Naive thymus-derived CD8-positive, alpha-beta T cell (primary cell): ENCODE measurements at regions of chr17 and their contacts with region 1.

Region 1: DNA sequence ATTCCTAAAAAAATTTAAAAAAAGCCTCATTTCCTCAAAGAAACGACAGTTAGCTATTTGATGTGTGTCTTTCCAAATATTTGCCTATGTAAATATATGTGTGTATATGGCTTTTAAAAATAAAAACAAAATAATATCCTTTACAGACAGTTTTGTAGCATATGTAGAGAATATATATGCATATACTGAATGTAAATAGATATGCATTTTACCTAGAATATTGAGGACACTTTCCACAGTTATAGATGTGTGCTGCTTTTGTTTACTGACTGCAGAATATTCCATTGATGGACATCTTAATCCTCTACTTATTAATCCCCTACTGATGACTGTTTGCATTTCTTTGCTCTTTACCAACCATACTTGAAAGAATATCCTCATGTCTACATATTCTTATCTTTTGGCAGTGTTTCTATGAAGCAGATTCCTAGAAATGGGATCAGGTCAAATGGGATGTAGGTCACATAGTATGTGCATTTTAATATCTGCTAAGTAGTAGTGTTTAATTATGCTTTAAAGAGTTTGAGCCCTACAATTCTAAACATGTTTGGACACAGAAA is 3.3 kb downstream of the CCL3L1 start:
- DNase-seq: no peak
- ATAC-seq: no peak
- H3K4me3 Mint-ChIP-seq: peak overlapping the region in 1 of 10 donors; percentile 3
- H3K27ac Mint-ChIP-seq: peak overlapping the region in 1 of 10 donors; percentile 0
- H3K4me1 Mint-ChIP-seq: peaks cover 6 to 78% (median 32%) of the 10 kb centered on the region in 4 donors
- H3K27me3 Mint-ChIP-seq: peaks cover 12 to 25% (median 14%) of the 10 kb centered on the region in 5 donors

Region 2: GRCh38 chr17:36183001-36183971 is 10.0 kb before region 1 on chr17:
- POLR2A ChIA-PET with region 1: interaction called, 11 read pairs
- DNase-seq: peak in 1 of 10 donors; percentile 37
- ATAC-seq: peak in 1 of 2 donors; percentile 33
- H3K4me3 Mint-ChIP-seq: peak overlapping the region in 5 of 10 donors; percentile 13 to 89 (median 70)
- H3K27ac Mint-ChIP-seq: peak overlapping the region in 3 of 10 donors; percentile 36 to 91 (median 69)
- H3K4me1 Mint-ChIP-seq: peaks cover 0 to 50% (median 8%) of the 10 kb centered on the region in 4 donors
- H3K27me3 Mint-ChIP-seq: peaks cover 30 to 65% (median 44%) of the 10 kb centered on the region in 5 donors